PC-9 (cell line): ENCODE measurements at regions of chr4 and their contacts with region 1.

Region 1: GRCh38 chr4:112735474-112735951 is 98.6 kb downstream of the LARP7 start:
- DNase-seq: peak in 1 of 2 experiments; percentile 67
- H3K4me3 ChIP-seq: no peak overlapping the region
- H3K27ac ChIP-seq: peak overlapping the region; percentile 51
- H3K4me1 ChIP-seq: peaks cover 15% of the 10 kb centered on the region; the same call in 1 of the 2 replicates
- H3K27me3 ChIP-seq: no peaks in the 10 kb centered on the region
- CTCF ChIP-seq: no peak

Region 2: DNA sequence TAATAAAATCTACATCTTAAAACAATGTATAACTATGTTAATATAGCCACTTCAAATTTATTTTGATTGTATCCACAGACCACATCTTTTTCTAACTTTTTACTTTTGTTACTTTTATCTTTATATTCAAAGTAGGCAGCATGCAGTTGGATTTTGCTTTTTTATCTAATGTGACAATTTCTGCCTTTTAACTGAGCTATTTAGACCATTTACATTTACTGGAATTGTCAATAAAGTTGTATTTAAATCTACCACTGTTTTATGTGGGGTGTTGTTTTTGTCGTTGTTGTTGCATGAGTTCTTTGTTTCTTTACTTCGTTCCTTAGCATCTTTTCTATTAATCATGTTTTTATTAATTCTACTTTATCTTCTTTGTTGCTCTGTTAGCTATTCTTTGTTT is 261.5 kb before region 1 on chr4:
- CTCF ChIA-PET with region 1: no interaction called
- POLR2A ChIA-PET with region 1: interaction called, 23 read pairs
- intact Hi-C with region 1: no loop called
- DNase-seq: no peak
- H3K4me3 ChIP-seq: no peak overlapping the region
- H3K27ac ChIP-seq: no peak overlapping the region
- H3K4me1 ChIP-seq: no peaks in the 10 kb centered on the region
- H3K27me3 ChIP-seq: no peaks in the 10 kb centered on the region
- CTCF ChIP-seq: no peak

Region 3: DNA sequence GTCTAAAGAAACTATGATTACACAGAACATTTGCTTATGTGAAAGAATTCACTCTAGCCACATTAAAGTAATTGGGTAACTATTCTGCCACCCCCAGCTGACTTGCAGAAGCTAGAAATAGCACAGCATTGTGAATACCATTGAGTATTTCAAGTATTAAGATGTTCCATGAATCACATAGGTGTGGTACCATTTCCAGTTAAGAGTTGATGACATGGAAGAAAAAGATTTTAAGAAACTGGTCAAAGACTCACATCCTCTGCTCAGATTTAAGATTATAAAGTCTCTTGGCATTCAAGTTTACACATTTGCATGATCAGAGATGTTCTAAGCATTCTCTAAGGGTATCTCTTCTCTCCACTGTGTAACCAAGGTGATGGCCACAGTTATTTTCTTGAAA is 738.5 kb after region 1 on chr4:
- CTCF ChIA-PET with region 1: no interaction called
- POLR2A ChIA-PET with region 1: no interaction called
- intact Hi-C with region 1: no loop called
- DNase-seq: peak in 1 of 2 experiments; percentile 40
- H3K4me3 ChIP-seq: no peak overlapping the region
- H3K27ac ChIP-seq: no peak overlapping the region
- H3K4me1 ChIP-seq: peaks cover 5% of the 10 kb centered on the region
- H3K27me3 ChIP-seq: no peaks in the 10 kb centered on the region
- CTCF ChIP-seq: no peak